ENCODE measurements at regions of chr11 and their contacts with region 1.

Region 1: GRCh38 chr11:104609311-104610085 is 288.8 kb downstream of the CASP12 start:
- DNase-seq: no peak
- H3K4me3 ChIP-seq: no peak overlapping the region
- CTCF ChIP-seq: peak; percentile 79

Region 2: DNA sequence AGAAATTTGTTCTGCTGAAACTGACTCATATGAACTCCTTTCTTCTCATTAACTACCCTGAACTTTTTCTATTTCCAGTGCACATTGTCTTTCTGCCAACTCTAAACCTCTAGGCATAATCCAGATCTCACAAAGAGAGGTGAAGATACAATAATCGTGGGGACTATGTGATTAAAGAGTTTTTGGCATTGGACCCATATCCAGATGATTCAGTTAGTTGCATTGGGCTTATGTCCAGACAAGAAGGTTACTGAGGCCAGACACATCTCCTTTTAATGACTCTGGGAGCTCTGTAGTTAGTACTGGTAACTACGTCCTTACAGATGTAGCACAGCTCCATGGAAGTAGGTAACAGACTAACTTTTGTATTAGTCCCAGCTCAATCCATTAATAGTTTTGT is 15.7 kb after region 1 on chr11:
- CTCF ChIA-PET with region 1: interaction called, 10 read pairs
- POLR2A ChIA-PET with region 1: no interaction called
- DNase-seq: no peak
- H3K4me3 ChIP-seq: no peak overlapping the region
- CTCF ChIP-seq: no peak

Region 3: DNA sequence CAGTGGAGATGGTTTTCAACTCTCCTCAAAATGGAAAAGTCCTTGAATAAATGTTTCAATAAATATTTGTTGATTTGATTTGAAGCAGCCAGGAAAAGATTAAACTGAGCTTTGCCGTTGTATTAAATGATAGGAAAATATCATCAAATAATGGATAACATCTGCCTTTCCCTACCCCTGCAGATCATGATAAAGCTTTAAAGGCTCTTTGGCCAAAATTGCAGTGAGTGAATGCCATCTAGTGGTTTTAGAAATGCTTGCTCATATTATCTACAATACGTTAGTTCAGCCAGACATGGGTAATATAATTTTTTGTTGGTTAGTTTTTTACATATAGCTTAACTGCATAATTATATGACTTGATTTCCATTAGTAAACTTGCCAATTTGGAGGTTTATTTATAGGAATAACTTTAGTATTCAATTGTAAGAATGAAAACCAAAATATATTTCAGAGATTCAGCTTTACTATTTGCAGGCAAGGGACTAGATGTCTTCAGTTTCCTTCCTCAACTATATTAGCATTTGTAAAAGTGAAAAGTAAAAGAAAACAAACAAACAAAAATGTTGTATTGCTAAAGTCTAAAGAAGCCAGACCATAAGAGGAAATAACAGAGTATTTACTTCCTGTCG is 1253.4 kb after region 1 on chr11:
- CTCF ChIA-PET with region 1: interaction called, 22 read pairs
- POLR2A ChIA-PET with region 1: no interaction called
- DNase-seq: peak; percentile 4
- H3K4me3 ChIP-seq: no peak overlapping the region
- CTCF ChIP-seq: peak; percentile 50